Activated T-helper 1 cell treated with anti-CD3 and anti-CD28 coated beads, Interleukin-12 subunit alpha, Interleukin-12 subunit beta, Interleukin-2, Interleukin-4 antibody, amounts not matched to agents 30 ng/mL and 10 ng/mL and 1 ng/mL, durations not matched to agents 14 hours and 24 hours and 36 hours (primary cell): ENCODE measurements at regions of chr16 and their contacts with region 1.

Region 1: GRCh38 chr16:85610508-85611332 is 2.4 kb upstream of the GSE1 start:
- DNase-seq: peak; percentile 75
- H3K4me3 Mint-ChIP-seq: peak overlapping the region; percentile 80
- H3K27ac Mint-ChIP-seq: peak overlapping the region; percentile 63
- H3K4me1 Mint-ChIP-seq: peaks cover 26% of the 10 kb centered on the region
- H3K27me3 Mint-ChIP-seq: peaks cover 13% of the 10 kb centered on the region

Region 2: GRCh38 chr16:85114909-85115567 is 495.7 kb before region 1 on chr16:
- intact Hi-C with region 1: loop called (anchors 10 kb)
- DNase-seq: peak; percentile 68
- H3K4me3 Mint-ChIP-seq: peak overlapping the region; percentile 60
- H3K27ac Mint-ChIP-seq: peak overlapping the region; percentile 70
- H3K4me1 Mint-ChIP-seq: peaks cover 7% of the 10 kb centered on the region
- H3K27me3 Mint-ChIP-seq: peaks cover 1% of the 10 kb centered on the region

Region 3: GRCh38 chr16:85393674-85394483 is 216.8 kb before region 1 on chr16:
- intact Hi-C with region 1: loop called (anchors 1 kb)
- DNase-seq: peak; percentile 31
- H3K4me3 Mint-ChIP-seq: no peak overlapping the region
- H3K27ac Mint-ChIP-seq: no peak overlapping the region
- H3K4me1 Mint-ChIP-seq: no peaks in the 10 kb centered on the region
- H3K27me3 Mint-ChIP-seq: no peaks in the 10 kb centered on the region

Region 4: DNA sequence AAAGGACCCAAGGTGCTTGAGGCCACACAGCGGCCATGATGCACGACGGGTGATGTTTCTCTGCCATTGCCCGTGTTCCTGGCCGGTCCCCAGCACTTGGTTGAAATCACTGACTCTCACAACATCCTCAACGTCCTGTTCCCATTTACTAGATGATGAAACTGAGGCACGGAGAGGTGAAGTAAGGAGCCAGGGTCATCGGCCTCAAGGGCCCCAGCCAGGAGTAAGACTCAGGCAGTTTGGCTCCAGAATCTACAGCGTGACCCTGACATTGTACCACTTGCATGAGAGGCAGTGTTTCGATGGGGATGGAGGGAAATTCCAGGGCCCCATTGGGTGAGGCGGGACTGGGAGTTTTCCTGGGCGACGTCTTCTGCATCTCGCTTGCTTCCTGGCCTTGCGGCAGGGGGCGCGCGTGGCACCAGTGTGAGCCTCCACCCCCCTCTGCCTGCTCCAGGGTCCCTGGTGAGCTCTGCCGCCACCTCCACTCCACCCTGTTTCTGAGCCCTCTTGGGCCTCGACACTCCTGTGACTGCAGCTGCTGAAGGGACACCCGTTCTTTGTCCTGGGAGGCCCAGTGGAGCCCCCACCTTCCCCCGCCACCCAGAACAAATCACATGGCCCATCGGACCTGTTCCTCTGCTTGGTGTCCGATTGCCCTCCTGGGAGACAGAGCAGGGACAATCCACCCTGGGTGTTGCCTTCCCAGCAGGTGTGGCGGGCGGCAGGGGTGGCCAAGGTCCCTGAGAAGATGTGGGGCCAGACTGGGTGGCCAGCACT is 130.6 kb before region 1 on chr16:
- intact Hi-C with region 1: no loop called
- DNase-seq: no peak
- H3K4me3 Mint-ChIP-seq: no peak overlapping the region
- H3K27ac Mint-ChIP-seq: no peak overlapping the region
- H3K4me1 Mint-ChIP-seq: no peaks in the 10 kb centered on the region
- H3K27me3 Mint-ChIP-seq: no peaks in the 10 kb centered on the region

Region 5: GRCh38 chr16:85491058-85491771 is 119.5 kb before region 1 on chr16:
- intact Hi-C with region 1: loop called (anchors 1 kb)
- DNase-seq: no peak
- H3K4me3 Mint-ChIP-seq: no peak overlapping the region
- H3K27ac Mint-ChIP-seq: no peak overlapping the region
- H3K4me1 Mint-ChIP-seq: no peaks in the 10 kb centered on the region
- H3K27me3 Mint-ChIP-seq: peaks cover 2% of the 10 kb centered on the region

Region 6: DNA sequence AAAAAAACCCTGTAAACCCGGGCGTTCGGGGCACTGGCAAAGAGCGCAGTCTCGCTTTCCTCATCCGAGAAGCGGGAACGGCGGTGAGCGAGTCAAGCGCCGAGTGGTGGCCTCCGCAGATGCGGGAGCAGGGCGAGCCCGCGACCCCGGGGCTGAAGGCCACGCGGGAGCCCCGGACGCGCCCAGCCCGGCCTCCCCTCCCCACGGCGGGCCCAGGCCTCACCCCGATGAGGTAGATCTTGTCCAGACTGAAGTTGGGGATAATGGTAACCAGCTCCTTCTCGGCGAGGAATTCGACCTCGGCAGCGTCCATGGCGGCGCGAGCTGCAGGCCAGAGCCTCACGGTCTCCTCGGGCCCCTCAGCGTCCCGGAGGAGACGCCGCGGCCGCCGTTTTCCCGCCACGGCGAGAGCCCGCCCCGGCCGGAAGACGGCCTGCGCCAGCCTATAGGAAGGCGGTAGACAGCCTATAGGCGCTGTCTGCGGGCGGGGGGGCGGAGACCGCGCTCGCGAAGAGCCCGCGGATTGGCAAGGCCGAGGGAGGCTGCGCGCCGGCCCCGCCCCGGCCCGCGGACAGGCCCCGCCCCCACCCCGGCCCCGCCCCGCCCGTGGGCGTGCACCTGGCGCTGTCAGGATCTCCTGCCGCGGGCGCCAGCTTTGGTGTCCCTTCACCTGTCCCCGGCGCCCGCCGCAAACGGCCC is 78.0 kb after region 1 on chr16 and contains the start of gene GINS2:
- intact Hi-C with region 1: loop called (anchors 2 kb)
- DNase-seq: peak; percentile 89
- H3K4me3 Mint-ChIP-seq: peak within 1 kb of the TSS; percentile 86
- H3K27ac Mint-ChIP-seq: peak within 1 kb of the TSS; percentile 86
- H3K4me1 Mint-ChIP-seq: peaks cover 8% of the 10 kb centered on the region
- H3K27me3 Mint-ChIP-seq: peaks cover 7% of the 10 kb centered on the region
- total RNA-seq, gene GINS2: 87.2 and 91.1 TPM in 2 replicates